A549 (cell line): ENCODE measurements at regions of chr7 and their contacts with region 1.

Region 1: GRCh38 chr7:25894902-25895791 is 256.9 kb upstream of the NFE2L3 start:
- DNase-seq: peak; percentile 42 to 75
- ATAC-seq: peak; percentile 88 to 94
- H3K4me3 ChIP-seq: peak overlapping the region; percentile 22
- H3K27ac ChIP-seq: peak overlapping the region in 1 of 2 experiments; percentile 4; a peak in 3 of 6 replicates
- H3K4me1 ChIP-seq: peaks cover 6% of the 10 kb centered on the region; the same call in 1 of the 3 replicates
- CTCF ChIP-seq: peak; percentile 61
- EP300 ChIP-seq: no peak
- POLR2A ChIP-seq: no peak
- RAD21 ChIP-seq: peak in 1 of 2 experiments; percentile 24; a peak in 2 of 5 replicates

Region 2: DNA sequence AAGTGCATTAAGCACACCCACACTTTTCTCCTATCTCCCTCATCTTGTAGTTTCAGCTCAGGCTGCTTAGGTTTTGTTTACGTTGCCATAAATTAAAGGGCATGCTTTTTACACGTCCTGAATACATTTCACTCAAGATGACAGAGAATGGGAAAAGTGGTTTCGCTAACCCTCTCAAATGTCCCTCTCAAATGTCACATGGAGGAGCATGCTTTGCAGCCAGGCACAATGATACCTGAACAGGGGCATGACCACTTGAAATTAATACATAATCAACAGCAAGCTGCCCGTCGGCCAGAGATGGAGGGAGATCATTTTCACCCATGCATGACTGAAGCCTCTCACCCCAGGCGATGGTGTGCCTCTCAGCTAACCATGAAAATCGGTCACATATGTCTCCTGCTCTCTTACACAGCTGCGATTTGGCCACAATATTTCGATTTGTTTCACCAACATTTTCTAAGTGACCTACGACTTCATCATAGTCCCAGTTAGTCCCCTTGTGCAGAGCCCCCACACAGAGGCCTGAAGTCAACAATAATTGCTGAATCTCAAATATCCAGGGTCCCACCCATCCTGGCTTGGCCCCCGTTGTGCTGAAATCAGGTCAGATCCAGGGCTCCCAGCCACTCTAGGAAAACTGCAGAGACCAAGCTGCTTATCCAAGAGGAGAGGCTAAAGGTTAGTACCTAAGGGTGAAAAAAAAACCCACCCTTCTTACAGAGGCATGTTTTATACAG is 117.0 kb before region 1 on chr7:
- CTCF ChIA-PET with region 1: no interaction called
- POLR2A ChIA-PET with region 1: no interaction called
- DNase-seq: no peak
- ATAC-seq: no peak
- H3K4me3 ChIP-seq: no peak overlapping the region
- H3K27ac ChIP-seq: no peak overlapping the region
- H3K4me1 ChIP-seq: no peaks in the 10 kb centered on the region
- CTCF ChIP-seq: no peak
- EP300 ChIP-seq: no peak
- POLR2A ChIP-seq: no peak
- RAD21 ChIP-seq: no peak

Region 3: GRCh38 chr7:25908154-25908949 is 13.2 kb after region 1 on chr7:
- CTCF ChIA-PET with region 1: interaction called, 42 read pairs
- POLR2A ChIA-PET with region 1: no interaction called
- DNase-seq: no peak
- ATAC-seq: no peak
- H3K4me3 ChIP-seq: no peak overlapping the region
- H3K27ac ChIP-seq: no peak overlapping the region
- H3K4me1 ChIP-seq: no peaks in the 10 kb centered on the region
- CTCF ChIP-seq: no peak
- EP300 ChIP-seq: no peak
- POLR2A ChIP-seq: no peak
- RAD21 ChIP-seq: no peak

Region 4: GRCh38 chr7:26061688-26062150 is 166.6 kb after region 1 on chr7:
- CTCF ChIA-PET with region 1: interaction called, 44 read pairs
- POLR2A ChIA-PET with region 1: no interaction called
- DNase-seq: peak; percentile 59 to 68
- ATAC-seq: peak; percentile 85 to 95; a peak in 5 of 6 replicates
- H3K4me3 ChIP-seq: no peak overlapping the region
- H3K27ac ChIP-seq: no peak overlapping the region
- H3K4me1 ChIP-seq: no peaks in the 10 kb centered on the region
- CTCF ChIP-seq: peak; percentile 70
- EP300 ChIP-seq: no peak
- POLR2A ChIP-seq: no peak
- RAD21 ChIP-seq: peak; percentile 51 to 65

Region 5: DNA sequence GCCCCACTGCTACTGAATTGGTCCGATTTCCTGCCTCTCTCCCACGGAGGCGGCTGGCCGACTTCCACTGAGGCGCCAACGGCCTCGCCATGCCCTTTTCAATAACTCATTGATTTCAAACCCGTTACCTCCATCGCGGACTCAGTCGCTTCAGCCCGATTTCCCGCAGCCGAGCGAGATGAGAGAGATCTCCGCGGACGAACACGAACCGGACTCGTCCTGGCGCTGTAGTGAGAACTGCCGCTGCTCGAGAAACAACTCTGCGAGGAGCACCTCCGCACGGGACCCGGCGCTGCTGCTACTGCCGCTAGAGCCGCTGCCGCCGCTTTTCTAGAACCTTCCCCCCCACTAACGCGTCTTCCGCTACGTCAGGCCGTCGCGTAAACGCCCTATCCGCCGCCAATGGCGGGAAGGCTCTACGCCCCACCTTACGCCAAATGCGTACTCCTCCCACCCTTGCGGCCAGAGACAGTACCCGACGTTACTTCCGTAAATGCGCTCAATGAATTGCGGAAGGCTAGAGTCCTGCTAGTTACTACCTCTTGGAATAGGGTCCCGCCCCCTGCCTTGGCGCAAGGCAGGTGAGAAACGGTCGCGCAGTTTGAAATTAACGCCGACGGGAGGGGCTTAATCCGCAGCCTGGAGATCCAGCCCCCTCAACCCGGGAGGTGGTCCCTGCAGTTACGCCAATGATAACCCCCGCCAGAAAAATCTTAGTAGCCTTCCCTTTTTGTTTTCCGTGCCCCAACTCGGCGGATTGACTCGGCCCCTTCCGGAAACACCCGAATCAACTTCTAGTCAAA is 305.5 kb after region 1 on chr7 and contains the start of gene HNRNPA2B1:
- CTCF ChIA-PET with region 1: interaction called, 14 read pairs
- POLR2A ChIA-PET with region 1: interaction called, 6 read pairs
- DNase-seq: peak; percentile 71 to 97
- ATAC-seq: peak; percentile 68 to 78
- H3K4me3 ChIP-seq: peak within 1 kb of the TSS; percentile 92
- H3K27ac ChIP-seq: peak within 1 kb of the TSS; percentile 99
- H3K4me1 ChIP-seq: peaks cover 37% of the 10 kb centered on the region
- CTCF ChIP-seq: no peak
- EP300 ChIP-seq: no peak
- POLR2A ChIP-seq: peak; percentile 99
- RAD21 ChIP-seq: no peak
- polyA plus RNA-seq, gene HNRNPA2B1: 595 and 1,070 TPM in 2 replicates

Region 6: GRCh38 chr7:26376175-26376917 is 481.2 kb after region 1 on chr7:
- CTCF ChIA-PET with region 1: interaction called, 13 read pairs
- POLR2A ChIA-PET with region 1: no interaction called
- DNase-seq: peak; percentile 25 to 52
- ATAC-seq: peak; percentile 90 to 91
- H3K4me3 ChIP-seq: peak overlapping the region; percentile 59
- H3K27ac ChIP-seq: peak overlapping the region; percentile 46 to 81
- H3K4me1 ChIP-seq: no peaks in the 10 kb centered on the region
- CTCF ChIP-seq: no peak
- EP300 ChIP-seq: no peak
- POLR2A ChIP-seq: no peak
- RAD21 ChIP-seq: no peak

Region 7: DNA sequence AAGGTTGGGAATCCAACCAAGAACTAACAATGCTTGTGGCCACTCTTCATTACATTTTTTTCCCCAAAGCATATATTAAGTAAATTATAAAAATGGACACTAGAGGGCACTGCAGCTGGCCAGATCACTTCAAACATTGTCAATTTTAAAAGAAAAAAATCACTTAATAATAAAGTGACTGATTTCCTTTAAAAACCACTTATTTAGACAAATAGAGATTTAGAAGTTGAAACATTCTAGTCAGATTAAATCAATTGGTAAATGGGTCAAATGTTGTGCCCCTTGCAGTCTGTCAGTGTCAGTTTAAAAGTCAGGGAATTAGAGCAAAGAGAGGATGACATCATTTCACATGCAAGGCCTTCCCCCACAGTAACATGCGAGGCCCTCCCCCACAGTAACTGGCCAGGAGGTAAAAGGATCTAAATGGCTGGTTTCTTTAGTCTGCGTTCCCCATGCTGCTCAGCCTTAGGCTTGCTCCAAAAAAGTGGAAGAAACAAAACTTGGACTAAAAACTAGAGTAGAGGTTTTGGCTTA is 791.4 kb after region 1 on chr7:
- CTCF ChIA-PET with region 1: interaction called, 20 read pairs
- POLR2A ChIA-PET with region 1: no interaction called
- DNase-seq: peak in 1 of 2 experiments; percentile 54
- ATAC-seq: peak; percentile 50 to 78; a peak in 4 of 6 replicates
- H3K4me3 ChIP-seq: no peak overlapping the region
- H3K27ac ChIP-seq: peak overlapping the region in 1 of 2 experiments; percentile 54; a peak in 3 of 6 replicates
- H3K4me1 ChIP-seq: peaks cover 43% of the 10 kb centered on the region
- CTCF ChIP-seq: peak; percentile 88
- EP300 ChIP-seq: no peak
- POLR2A ChIP-seq: no peak
- RAD21 ChIP-seq: peak; percentile 67 to 85